PC-3 (cell line): ENCODE measurements at regions of chr2 and their contacts with region 1.

Region 1: GRCh38 chr2:32553829-32554432 is 73.9 kb upstream of the TTC27 start:
- DNase-seq: peak; percentile 54
- ATAC-seq: peak; percentile 77
- H3K4me3 ChIP-seq: no peak overlapping the region
- H3K27ac ChIP-seq: no peak overlapping the region
- H3K4me1 ChIP-seq: no peaks in the 10 kb centered on the region
- H3K27me3 ChIP-seq: no peaks in the 10 kb centered on the region
- CTCF ChIP-seq: peak; percentile 83

Region 2: DNA sequence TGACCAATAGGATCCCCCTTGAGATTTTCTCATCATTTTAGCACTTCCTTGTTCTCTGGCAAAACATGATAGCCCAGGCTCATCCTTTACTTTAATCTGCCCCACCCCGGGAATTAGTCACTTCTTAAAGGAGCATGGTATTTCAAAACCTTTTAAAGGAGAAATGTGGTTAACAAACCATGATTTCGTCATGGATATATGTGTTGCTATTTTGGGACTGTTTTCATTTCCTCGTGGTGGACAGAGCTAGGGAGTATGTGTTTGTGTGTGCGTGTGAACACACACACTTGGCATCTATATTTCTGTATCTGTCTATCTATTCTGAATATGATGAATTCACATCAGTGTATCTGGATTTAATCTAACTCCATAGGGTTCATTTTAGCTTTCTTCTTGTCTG is 69.0 kb before region 1 on chr2:
- CTCF ChIA-PET with region 1: no interaction called
- POLR2A ChIA-PET with region 1: no interaction called
- intact Hi-C with region 1: loop called (anchors 10 kb)
- DNase-seq: peak; percentile 80
- ATAC-seq: peak; percentile 87
- H3K4me3 ChIP-seq: no peak overlapping the region
- H3K27ac ChIP-seq: peak overlapping the region; percentile 46
- H3K4me1 ChIP-seq: peaks cover 15% of the 10 kb centered on the region
- H3K27me3 ChIP-seq: no peaks in the 10 kb centered on the region
- CTCF ChIP-seq: no peak

Region 3: GRCh38 chr2:32946314-32947075 is 392.6 kb after region 1 on chr2 and contains the start of gene LTBP1:
- CTCF ChIA-PET with region 1: no interaction called
- POLR2A ChIA-PET with region 1: no interaction called
- intact Hi-C with region 1: loop called (anchors 5 kb)
- DNase-seq: peak; percentile 80
- ATAC-seq: peak; percentile 75
- H3K4me3 ChIP-seq: peak within 1 kb of the TSS; percentile 72
- H3K27ac ChIP-seq: 0 out of 2 replicates have a peak within 1 kb of the TSS, but pooled peaks have one; percentile 21
- H3K4me1 ChIP-seq: peaks cover 7% of the 10 kb centered on the region
- H3K27me3 ChIP-seq: no peaks in the 10 kb centered on the region
- CTCF ChIP-seq: peak; percentile 95
- total RNA-seq, gene LTBP1: 34.0 and 45.9 TPM in 2 replicates